ENCODE measurements at regions of chr22 and their contacts with region 1.

Region 1: DNA sequence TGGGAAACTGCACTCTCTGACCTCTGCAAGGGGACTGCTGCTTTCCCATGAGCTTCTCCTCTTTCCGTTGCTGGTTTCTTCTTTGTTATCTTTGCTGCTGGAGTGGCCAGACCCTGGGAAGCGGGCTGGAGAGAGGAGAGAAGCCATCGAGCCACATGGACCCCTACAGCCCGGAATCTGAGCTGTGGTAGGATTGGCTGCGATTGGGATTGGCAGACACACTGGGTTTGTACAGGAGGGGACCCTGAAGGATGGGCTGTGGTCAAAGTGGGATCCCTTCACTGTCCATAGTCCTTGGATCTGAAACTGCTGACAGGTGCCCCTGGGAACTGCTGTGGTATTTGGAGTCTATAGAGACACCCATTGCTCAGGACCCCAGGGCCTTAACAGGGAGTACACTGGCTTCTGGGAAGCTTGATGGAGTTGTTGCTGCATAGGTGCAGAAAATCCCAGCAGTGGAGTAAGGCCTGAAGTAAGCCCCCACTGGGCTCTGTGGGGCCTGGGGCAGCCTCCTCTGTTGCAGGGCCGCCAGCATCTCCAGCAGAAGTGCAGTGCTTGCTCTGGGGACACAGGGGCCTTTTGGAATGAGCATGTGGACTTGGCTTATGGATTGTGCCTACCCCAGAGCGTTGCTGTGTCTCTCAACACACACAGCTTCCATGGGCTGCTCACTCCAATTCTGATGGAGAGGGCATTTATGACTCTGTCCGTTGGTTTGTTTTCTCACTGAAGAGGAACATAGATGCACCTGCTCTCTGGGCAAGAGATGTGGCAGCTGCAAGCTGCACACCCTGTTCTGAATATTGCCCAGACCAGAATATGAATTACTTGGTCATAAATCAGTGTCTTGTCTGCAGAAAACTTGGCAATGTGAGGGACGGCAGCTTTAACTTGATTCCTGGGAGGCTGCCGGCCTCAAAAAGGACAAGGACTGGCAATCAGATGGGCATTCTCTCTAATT is 32.0 kb downstream of the BCR start:
- DNase-seq: no peak
- H3K4me3 Mint-ChIP-seq: no peak overlapping the region
- H3K27ac Mint-ChIP-seq: no peak overlapping the region
- H3K4me1 Mint-ChIP-seq: peaks cover 34% of the 10 kb centered on the region
- H3K27me3 Mint-ChIP-seq: no peaks in the 10 kb centered on the region

Region 2: DNA sequence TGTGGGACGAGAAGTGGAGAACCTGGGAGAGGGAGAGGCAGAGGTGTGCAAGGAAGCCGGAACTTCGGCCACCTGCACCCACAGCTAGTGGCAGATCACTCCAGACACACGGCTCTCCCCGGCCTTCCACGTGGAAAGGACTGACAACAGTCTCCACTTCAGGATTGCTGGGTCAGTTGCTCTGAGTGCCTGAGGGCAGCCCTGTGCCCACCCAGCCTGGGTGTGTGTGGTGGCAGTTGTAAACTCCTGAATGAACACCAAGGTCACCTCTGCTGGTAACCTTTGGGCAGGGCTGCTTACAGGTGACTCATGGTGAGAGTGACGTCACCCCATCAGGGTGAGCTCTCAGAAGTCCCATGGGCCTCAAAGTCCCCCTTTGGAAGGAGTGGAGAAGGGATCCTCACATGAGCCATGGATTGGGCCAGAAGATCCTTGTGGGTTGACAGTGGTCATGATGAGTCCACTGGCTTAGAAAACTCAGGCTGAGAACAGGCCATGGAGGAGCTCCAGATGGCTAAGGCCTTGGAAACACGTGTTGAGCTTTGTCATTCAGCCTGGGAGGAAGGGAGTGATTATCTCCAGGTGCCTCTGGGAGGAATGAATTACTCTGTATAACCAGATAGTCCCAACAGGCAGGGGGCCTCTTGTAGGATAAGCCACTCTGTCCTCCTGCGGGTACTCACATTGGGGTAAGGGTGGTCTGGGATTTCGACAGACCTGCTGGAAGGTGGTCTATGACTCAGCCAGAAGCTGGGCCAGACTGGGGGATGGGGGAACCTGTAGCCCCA is 39.3 kb after region 1 on chr22:
- intact Hi-C with region 1: loop called (anchors 5 kb)
- DNase-seq: no peak
- H3K4me3 Mint-ChIP-seq: no peak overlapping the region
- H3K27ac Mint-ChIP-seq: peak overlapping the region; percentile 13
- H3K4me1 Mint-ChIP-seq: peaks cover 34% of the 10 kb centered on the region
- H3K27me3 Mint-ChIP-seq: no peaks in the 10 kb centered on the region

Region 3: GRCh38 chr22:23622634-23623033 is 410.3 kb after region 1 on chr22:
- intact Hi-C with region 1: no loop called
- DNase-seq: no peak
- H3K4me3 Mint-ChIP-seq: no peak overlapping the region
- H3K27ac Mint-ChIP-seq: no peak overlapping the region
- H3K4me1 Mint-ChIP-seq: peaks cover 3% of the 10 kb centered on the region
- H3K27me3 Mint-ChIP-seq: no peaks in the 10 kb centered on the region

Measured in activated CD4-positive, alpha-beta T cell treated with anti-CD3 and anti-CD28 coated beads, Interleukin-2, amount 10 ng/mL, durations not matched to agents 24 days and 14 days (primary cell).